ENCODE measurements at regions of chr14 and their contacts with region 1.

Region 1: DNA sequence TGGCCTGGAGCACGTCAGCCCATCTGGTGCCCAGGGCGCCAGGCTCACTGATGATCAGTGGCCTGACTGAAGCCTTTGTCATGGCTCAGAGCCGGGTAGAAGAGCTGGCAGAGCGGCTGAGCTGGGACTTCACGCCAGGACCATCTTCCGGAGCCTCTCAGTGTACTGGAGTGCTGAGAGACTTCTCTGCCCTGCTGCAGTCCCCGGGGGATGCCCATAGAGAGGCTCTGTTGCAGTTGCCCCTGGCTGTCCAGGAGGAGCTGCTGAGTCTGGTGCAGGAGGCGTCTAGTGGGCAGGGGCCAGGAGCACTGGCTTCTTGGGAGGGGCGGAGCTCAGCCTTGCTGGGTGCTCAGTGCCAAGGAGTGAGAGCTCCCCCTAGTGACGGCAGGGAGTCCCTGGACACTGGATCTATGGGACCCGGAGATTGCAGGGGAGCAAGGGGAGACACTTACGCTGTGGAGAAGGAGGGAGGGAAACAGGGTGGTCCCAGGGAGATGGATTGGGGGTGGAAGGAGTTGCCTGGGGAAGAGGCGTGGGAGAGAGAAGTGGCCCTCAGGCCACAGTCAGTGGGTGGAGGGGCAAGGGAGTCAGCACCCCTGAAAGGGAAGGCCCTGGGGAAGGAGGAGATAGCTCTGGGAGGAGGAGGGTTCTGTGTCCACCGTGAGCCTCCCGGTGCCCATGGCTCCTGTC is 2.0 kb downstream of the KHNYN start:
- DNase-seq: peak; percentile 87 to 95 (median 92)
- ATAC-seq: peak; percentile 59 to 79 (median 71)
- H3K4me3 ChIP-seq: peak overlapping the region in 2 of 4 donors; percentile 74 to 78
- H3K27ac ChIP-seq: peak overlapping the region in 2 of 4 donors; percentile 92 to 96
- H3K4me1 ChIP-seq: peaks cover 0 to 37% (median 33%) of the 10 kb centered on the region in 3 donors
- H3K27me3 ChIP-seq: no peaks in the 10 kb centered on the region
- CTCF ChIP-seq: peak; percentile 86 to 90 (median 89)

Region 2: DNA sequence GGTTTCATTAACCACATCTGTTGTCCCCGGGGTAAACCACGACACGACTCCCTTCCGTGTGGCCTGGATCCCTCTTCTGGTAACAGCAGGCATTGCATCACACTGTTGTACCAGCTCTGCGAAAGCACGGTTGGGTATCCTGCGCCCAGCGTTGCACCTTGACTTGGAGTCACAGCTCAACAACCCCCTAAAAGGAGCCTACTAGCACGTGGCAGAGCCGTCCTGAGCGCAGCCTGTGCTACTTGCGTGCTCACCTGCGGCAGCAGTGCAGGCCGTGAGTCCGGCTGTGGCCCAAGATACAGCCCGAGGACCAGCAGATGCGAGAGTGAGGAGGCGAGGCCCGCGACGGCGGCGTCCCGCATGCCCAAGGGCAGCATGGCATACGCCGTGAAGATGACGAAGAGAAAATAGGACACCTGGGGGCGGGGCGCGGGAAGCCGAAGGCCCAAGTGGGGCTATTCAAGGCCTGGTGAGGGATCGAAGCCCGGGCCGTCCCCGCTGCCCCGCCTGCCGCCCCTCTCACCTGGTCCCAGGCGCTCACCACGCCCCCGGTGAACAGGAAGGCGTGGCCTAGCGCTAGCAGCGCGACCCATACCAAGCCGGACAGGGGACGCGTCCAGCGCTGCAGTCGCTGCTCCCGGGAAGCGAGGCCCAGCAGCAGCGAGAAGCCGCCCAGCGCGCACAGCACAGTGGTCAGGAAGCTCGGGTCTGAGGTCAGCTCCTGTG is 99.3 kb before region 1 on chr14:
- intact Hi-C with region 1: loop called (anchors 5 to 10 kb)
- DNase-seq: peak; percentile 69 to 82 (median 74)
- ATAC-seq: peak; percentile 75 to 86 (median 83)
- H3K4me3 ChIP-seq: peak overlapping the region in 3 of 4 donors; percentile 7 to 36 (median 23)
- H3K27ac ChIP-seq: no peak overlapping the region
- H3K4me1 ChIP-seq: peaks cover 5 to 19% (median 15%) of the 10 kb centered on the region in 3 donors
- H3K27me3 ChIP-seq: peaks cover 0 to 6% (median 0%) of the 10 kb centered on the region in 4 donors
- CTCF ChIP-seq: peak; percentile 53 to 79 (median 76)

Region 3: DNA sequence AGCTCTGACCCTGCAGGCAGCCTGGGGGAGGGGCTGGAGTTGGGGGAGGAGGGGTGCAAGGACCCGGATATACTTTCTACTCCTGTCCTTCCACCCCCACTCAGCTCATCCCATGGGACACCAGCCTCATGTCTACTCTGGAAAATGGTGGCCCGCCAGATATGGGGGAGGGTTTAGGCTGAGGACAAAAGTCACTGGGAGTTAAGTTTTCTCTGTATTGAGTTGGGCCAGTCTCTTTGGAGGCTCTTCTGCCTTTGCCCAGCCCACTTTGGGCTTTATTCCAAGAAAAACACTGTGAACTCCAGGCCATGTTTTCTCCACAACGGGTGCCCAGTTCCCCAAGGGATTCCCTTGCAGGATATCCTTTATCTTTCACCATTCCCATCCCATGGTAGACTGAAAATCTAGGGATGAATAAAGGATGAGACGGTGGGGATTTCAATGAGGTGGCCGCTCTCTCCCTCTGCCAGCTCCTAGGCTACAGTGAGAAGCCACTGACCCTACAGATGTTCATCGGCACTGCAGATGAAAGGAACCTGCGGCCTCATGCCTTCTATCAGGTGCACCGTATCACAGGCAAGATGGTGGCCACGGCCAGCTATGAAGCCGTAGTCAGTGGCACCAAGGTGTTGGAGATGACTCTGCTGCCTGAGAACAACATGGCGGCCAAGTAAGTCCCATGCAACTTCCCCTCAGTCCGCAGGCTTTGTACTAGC is 58.9 kb before region 1 on chr14:
- intact Hi-C with region 1: loop called in 1 of 3 experiments (anchors 5 kb)
- DNase-seq: no peak
- ATAC-seq: no peak
- H3K4me3 ChIP-seq: no peak overlapping the region
- H3K27ac ChIP-seq: no peak overlapping the region
- H3K4me1 ChIP-seq: no peaks in the 10 kb centered on the region
- H3K27me3 ChIP-seq: no peaks in the 10 kb centered on the region
- CTCF ChIP-seq: no peak

Measured in pancreas (tissue), 10 donors.